ENCODE measurements at regions of chr14 and their contacts with region 1.

Region 1: DNA sequence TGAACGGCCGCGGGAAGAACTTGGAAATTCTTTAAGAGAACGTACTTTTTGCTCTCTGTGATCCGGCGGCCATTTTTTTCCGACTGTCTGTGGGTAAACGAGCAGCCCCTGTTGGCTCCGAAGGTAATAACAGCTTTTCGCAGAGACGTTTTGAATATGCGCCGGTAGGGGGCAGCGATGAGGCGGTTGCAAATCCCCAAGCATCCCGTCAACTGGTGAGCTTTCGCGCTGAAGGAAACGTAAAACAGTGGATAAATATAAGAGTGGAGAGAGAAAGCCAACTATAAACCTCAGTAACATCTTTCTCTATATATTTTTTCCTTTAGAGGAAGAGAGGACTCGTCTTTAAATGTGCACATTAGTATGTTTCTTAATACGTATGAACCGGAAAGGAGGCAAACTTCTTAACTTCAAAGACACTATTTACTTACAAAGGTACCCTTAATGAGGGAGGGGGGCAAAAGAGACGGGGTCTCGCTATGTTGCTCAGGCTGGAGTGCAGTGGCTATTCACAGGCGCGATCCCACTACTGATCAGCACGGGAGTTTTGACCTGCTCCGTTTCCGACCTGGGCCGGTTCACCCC is 9.6 kb upstream of the NEMF start:
- DNase-seq: peak; percentile 95
- H3K4me3 ChIP-seq: peak overlapping the region; percentile 58
- H3K27ac ChIP-seq: peak overlapping the region; percentile 93
- H3K4me1 ChIP-seq: peaks cover 11% of the 10 kb centered on the region
- H3K27me3 ChIP-seq: no peaks in the 10 kb centered on the region
- CTCF ChIP-seq: peak; percentile 100

Region 2: GRCh38 chr14:49946320-49947141 is 84.3 kb after region 1 on chr14:
- CTCF ChIA-PET with region 1: no interaction called
- POLR2A ChIA-PET with region 1: interaction called, 24 read pairs
- intact Hi-C with region 1: no loop called
- DNase-seq: peak; percentile 94
- H3K4me3 ChIP-seq: peak overlapping the region; percentile 3
- H3K27ac ChIP-seq: peak overlapping the region; percentile 51
- H3K4me1 ChIP-seq: peaks cover 44% of the 10 kb centered on the region
- H3K27me3 ChIP-seq: no peaks in the 10 kb centered on the region
- CTCF ChIP-seq: no peak

Measured in A673 (cell line).